Sciatic nerve (tissue), 2 donors: ENCODE measurements at regions of chr2 and their contacts with region 1.

Region 1: DNA sequence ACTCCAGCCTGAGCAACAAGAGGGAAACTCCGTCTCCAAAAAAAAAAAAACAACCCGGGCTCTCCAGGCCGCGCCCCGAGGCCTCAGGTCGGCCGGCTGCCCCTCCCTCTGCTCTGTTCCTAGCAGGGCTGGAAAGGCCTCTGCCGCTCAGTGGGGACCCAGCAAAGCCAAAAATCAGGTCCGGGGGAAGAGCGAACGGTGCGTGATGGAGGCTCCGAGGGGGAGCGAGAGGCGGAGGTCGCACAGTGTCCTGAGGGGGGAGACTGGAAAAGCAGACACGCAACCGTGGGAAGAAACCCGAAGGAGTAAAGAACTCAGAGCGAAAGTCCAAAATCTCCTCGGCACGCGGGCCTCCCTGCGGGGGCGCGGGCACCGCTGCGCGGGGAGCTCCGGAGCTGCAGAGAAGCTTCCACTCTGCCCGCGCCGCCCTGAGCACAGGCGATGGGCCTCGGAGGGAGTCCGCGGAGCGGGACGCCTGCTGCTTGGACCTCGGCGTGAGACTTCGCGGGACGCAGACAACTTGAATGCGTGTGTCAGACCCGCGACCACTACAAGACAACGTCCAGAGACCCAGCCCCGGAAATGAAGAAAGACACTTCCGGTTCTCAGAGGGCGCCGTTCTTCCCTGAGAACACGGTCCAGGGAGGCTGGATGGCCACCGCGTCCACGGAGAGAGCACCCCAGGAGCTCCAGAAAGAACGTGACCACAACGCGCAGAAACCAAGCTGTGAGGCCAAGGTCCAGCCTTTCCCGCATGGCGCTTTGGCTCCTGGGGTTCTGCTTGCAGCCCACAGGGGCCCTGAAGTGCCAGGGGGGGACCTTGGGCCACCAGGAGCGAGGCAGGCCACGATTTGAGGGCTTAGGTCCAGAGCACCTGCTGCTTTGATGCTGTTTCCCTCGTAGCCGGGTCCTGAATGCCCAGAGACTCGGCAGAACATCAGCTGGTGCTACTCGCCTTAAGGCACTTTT is 219.8 kb downstream of the DPP10 start:
- DNase-seq: peak; percentile 57
- ATAC-seq: peak; percentile 86

Region 2: GRCh38 chr2:113357071-113357470 is 1305.2 kb before region 1 on chr2:
- intact Hi-C with region 1: no loop called
- DNase-seq: no peak
- ATAC-seq: no peak

Region 3: GRCh38 chr2:114614592-114614991 is 47.7 kb before region 1 on chr2:
- intact Hi-C with region 1: loop called (anchors 2 kb)
- DNase-seq: no peak
- ATAC-seq: no peak

Region 4: GRCh38 chr2:114709936-114710850 is 47.9 kb after region 1 on chr2:
- intact Hi-C with region 1: no loop called
- DNase-seq: no peak
- ATAC-seq: no peak